Activated T-helper 1 cell treated with anti-CD3 and anti-CD28 coated beads, Interleukin-12 subunit alpha, Interleukin-12 subunit beta, Interleukin-2, Interleukin-4 antibody, amounts not matched to agents 30 ng/mL and 10 ng/mL and 1 ng/mL, durations not matched to agents 14 hours and 24 hours and 36 hours (primary cell): ENCODE measurements at regions of chr11 and their contacts with region 1.

Region 1: GRCh38 chr11:65524741-65525545 is at the start of gene SCYL1:
- DNase-seq: peak; percentile 71
- H3K4me3 Mint-ChIP-seq: peak within 1 kb of the TSS; percentile 89
- H3K27ac Mint-ChIP-seq: peak within 1 kb of the TSS; percentile 82
- H3K4me1 Mint-ChIP-seq: peaks cover 46% of the 10 kb centered on the region
- H3K27me3 Mint-ChIP-seq: no peaks in the 10 kb centered on the region
- total RNA-seq, gene SCYL1: 103 and 109 TPM in 2 replicates

Region 2: DNA sequence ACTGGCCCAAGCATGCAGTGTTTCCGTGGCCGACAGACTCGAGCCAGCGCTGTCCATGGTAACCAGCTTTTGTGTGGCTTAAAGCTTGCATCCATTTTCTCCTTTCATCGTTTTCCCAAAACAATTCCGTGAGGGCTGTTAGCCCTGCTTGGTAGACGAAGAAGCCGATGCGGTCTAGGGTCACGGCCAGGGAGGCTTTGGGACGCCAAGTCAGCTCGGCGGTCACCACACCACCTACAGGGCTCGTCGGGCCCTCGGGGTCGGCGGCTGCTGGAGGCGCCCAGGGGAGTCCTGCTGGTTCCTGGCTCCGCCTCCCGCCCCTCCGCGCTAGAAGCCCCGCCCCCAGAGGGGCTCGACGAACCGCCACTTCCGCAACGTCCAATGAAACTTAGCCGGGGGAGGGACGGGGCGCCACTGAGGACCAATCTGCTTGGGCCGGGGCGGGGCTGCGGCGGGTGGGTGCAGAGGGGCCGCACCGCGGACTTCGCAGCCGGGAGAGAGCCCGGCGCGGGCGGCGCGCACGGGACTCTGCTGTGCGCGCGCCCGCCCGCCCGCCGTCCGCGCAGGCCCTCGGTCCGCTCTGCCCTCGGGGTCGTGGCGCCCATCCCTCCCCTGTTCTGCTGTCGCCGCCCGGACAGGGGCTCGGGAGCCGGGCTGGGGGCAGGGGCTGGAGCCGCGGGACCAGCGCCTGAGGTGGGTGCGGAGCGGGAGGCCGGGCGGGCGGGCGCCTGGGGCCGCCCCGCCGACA is 170.5 kb before region 1 on chr11 and contains the start of gene TIGD3:
- intact Hi-C with region 1: loop called (anchors 1 kb)
- DNase-seq: peak; percentile 93
- H3K4me3 Mint-ChIP-seq: peak within 1 kb of the TSS; percentile 89
- H3K27ac Mint-ChIP-seq: peak within 1 kb of the TSS; percentile 81
- H3K4me1 Mint-ChIP-seq: peaks cover 8% of the 10 kb centered on the region
- H3K27me3 Mint-ChIP-seq: peaks cover 16% of the 10 kb centered on the region
- total RNA-seq, gene TIGD3: 1.1 TPM in 2 replicates

Region 3: DNA sequence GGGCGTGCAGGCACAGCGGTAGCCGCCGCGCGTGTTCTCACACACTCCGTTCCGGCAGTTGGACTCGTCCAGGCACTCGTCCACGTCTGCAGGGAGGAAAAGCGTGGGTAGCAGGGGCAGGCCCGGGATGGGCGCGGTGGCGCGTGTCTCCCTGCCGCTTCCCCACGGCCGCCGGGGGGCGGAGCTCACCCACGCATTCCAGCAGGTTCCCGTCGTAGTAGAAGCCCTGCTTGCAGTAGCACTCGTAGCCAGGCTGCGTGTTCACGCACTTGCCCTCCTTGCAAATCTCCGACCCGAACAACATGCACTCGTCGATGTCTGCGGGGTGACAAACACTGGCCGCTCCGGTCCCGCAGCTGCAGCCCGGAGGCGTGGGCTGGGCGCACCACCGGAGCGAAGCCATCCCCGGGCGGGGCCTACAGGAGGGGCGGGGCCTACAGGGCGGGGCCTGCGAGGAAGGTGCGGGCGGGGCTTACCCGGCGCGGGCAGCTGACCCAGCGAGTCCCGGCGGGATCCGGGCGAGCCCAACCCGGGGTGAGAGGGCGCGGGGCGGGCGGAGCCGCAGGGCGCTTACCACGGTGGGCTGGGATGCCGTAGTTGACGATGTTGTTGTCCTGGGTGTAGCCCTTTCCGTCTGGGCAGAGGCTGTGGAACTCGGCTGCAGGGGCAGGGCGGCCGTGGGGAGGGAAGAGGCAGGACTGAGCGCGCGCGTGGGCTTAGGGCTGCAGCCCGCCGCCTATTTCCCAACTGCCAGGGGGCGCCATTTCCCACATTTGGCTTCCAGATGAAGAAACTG is 15.6 kb after region 1 on chr11:
- intact Hi-C with region 1: loop called (anchors 1 kb)
- DNase-seq: peak; percentile 86
- H3K4me3 Mint-ChIP-seq: peak overlapping the region; percentile 85
- H3K27ac Mint-ChIP-seq: peak overlapping the region; percentile 88
- H3K4me1 Mint-ChIP-seq: peaks cover 28% of the 10 kb centered on the region
- H3K27me3 Mint-ChIP-seq: no peaks in the 10 kb centered on the region

Region 4: DNA sequence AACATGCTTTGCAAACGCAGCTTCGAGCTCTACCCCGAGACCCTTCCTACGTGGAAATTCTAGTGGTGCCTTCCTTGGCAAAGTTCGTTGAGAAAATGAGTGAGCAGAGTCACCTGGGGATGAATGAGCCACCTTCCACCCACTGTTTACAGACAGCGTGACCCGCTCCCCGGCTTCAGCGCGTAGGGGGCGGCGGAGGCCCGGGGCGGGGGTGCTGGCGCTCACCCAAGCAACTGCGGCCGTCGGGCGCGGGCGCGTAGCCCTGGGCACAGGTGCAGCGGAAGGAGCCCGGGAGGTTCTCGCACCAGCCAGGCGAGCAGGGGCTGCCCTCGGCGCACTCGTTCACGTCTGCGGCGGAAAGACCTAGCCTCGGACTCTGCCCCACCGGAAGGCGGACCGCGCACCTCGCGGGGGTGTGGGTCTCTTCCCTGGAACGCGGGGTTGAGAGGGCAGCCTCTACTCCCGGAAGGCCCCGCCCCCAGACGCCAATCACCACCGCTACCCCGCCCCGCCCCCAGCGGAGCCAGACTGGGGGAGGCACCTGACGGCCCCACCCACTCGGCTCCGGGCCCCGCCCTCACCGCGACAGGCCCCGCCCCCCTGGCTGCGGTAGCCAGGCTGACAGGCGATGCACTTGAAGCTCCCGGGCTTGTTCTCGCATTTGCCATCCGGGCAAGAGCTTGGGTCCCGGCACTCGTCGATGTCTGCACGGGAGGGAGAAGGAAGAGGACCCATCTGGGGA is 21.4 kb after region 1 on chr11:
- intact Hi-C with region 1: loop called (anchors 1 kb)
- DNase-seq: peak; percentile 96
- H3K4me3 Mint-ChIP-seq: peak overlapping the region; percentile 76
- H3K27ac Mint-ChIP-seq: peak overlapping the region; percentile 79
- H3K4me1 Mint-ChIP-seq: peaks cover 44% of the 10 kb centered on the region
- H3K27me3 Mint-ChIP-seq: no peaks in the 10 kb centered on the region